Calu3 (cell line): ENCODE measurements at regions of chr6 and their contacts with region 1.

Region 1: DNA sequence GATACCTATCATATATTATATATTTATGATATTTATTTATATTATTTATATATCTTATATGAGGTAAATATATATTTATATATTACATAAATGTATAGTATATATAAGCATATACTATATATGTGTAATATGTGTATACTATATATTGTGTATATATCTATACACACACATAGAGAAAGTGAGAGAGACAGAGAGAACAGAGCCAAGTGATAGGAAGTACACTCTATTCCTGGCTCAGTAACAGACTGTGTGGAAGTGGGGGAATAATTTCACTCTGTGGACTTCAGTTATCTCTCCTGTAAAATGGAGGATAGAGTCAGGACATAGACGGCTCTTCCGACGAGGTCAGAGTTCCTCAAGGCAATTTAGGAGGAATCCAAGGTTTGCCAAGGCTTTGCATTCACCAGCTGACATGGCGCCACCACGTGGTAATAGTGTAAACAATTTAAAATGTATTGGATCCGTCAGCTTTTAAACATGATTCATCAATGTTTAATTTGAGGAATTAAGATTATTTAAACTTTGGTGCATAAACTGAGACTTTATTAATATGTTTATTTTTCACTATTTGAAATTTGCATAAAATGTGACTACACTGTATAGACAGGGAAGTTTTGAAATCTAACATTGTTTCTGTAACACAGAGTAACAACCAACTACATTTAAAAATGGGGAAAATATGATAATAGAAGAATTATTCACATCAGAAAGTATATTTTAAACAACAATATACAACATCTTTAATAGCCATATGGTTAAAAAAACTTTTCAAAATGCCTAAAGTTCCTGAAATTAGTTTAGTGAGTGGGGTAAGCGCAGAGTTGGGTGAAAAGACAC is 75.4 kb upstream of the TMEM244 start:
- DNase-seq: peak; percentile 55
- H3K4me3 Mint-ChIP-seq: no peak overlapping the region
- H3K27ac Mint-ChIP-seq: no peak overlapping the region
- H3K4me1 Mint-ChIP-seq: peaks cover 8% of the 10 kb centered on the region
- H3K27me3 Mint-ChIP-seq: no peaks in the 10 kb centered on the region
- CTCF ChIP-seq: peak; percentile 47

Region 2: DNA sequence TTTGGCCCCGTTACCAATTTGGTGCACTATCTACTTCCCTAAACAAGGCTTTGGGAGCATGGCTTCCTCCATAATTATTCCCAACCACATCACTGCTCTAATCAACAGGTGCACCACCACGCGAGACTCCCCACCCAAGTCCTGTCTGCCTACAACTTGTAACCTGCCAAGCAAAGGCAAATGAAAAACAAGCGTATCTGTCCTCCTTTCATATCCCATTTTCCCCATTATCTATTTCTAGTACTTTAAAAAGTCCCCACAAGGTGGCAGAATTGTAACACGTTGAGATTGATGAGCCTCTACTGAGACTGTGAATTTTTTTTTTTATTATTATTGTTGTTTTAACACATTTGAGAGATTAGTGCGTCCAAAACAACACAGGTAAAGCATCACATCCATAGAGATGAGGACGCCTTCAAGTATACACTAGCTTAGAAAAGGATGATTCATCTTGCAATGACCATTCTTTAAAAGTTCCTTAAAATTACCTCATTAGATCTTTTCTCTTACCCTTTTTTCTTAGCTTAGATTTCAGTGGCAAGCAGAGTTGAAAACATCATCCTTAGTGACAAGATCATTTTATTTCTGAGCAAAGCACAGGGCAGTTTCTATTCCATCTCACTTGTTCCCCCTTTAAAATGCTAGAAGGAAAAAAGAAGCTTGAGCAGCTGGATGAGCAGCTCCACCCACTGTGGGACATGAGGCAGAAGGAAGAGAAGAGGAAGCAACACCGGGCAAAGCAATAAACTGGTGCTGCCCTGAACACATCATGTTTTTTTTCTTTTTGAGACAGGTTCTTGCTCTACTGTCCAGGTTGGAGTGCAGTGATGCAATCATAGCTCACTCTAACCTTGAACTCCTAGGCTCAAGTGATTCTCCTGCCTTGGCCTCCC is 437.4 kb before region 1 on chr6:
- CTCF ChIA-PET with region 1: no interaction called
- intact Hi-C with region 1: loop called (anchors 2 kb)
- DNase-seq: peak; percentile 43
- H3K4me3 Mint-ChIP-seq: peak overlapping the region; percentile 61
- H3K27ac Mint-ChIP-seq: peak overlapping the region; percentile 89
- H3K4me1 Mint-ChIP-seq: peaks cover 63% of the 10 kb centered on the region
- H3K27me3 Mint-ChIP-seq: no peaks in the 10 kb centered on the region
- CTCF ChIP-seq: peak; percentile 77

Region 3: GRCh38 chr6:129598244-129599187 is 338.0 kb before region 1 on chr6:
- CTCF ChIA-PET with region 1: no interaction called
- intact Hi-C with region 1: loop called (anchors 10 kb)
- DNase-seq: peak; percentile 21
- H3K4me3 Mint-ChIP-seq: no peak overlapping the region
- H3K27ac Mint-ChIP-seq: peak overlapping the region; percentile 16
- H3K4me1 Mint-ChIP-seq: no peaks in the 10 kb centered on the region
- H3K27me3 Mint-ChIP-seq: no peaks in the 10 kb centered on the region
- CTCF ChIP-seq: peak; percentile 50

Region 4: DNA sequence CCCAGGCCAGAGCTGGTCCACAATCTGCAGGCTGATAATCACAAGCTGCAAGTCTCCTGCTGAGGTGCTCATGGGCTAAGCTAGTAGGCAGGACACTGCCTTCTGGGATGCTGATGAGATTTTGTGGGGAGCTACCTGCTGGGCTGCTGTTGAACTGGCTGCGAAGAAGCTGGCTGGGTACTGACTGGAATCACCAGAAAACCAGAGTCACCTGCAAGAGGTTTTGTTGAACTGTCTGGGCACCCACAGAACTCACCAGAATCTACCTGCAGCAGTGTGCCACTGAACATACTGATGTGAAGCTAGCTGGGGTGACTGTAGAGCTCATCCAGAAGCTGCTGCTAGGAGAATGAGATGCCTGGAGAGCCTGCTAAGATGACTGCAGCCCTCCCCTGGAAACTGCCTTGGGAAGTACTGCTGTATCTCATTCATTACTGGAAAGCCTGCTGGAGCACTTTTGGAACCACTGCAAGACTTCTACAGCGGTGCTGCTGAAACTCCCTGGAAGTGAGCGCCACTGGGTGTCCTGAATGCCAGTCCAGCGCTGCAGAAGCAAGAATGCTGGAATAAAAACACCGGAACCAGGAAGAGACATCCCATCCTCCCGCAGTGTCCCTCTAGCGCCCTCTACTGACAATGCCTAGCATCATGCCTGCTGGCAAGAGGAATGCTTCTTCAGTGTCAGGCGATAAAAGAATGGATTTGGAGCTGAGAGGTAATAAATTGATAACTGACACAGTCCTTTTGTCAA is 161.7 kb before region 1 on chr6:
- CTCF ChIA-PET with region 1: no interaction called
- intact Hi-C with region 1: loop called (anchors 10 kb)
- DNase-seq: peak; percentile 76
- H3K4me3 Mint-ChIP-seq: no peak overlapping the region
- H3K27ac Mint-ChIP-seq: no peak overlapping the region
- H3K4me1 Mint-ChIP-seq: no peaks in the 10 kb centered on the region
- H3K27me3 Mint-ChIP-seq: peaks cover 29% of the 10 kb centered on the region
- CTCF ChIP-seq: peak; percentile 74

Region 5: DNA sequence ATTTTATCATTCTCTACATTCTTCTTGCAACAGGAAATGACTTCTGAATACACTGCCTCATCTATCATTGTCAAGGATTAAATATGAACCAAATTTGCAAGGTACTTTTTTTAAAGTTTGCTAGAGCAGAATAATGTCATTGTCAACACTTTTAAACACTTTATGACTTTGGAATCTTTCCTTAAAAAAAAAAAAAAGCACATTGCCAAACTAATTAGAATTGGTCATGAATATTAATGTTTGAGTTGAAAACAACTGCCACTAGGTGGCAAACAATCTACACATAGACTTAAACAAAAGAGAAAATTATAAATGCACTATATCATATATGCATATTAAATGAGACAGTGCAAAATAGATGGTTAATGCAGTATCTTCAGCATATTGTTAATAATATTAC is 42.9 kb before region 1 on chr6:
- CTCF ChIA-PET with region 1: no interaction called
- intact Hi-C with region 1: loop called (anchors 1 kb)
- DNase-seq: no peak
- H3K4me3 Mint-ChIP-seq: no peak overlapping the region
- H3K27ac Mint-ChIP-seq: no peak overlapping the region
- H3K4me1 Mint-ChIP-seq: peaks cover 10% of the 10 kb centered on the region
- H3K27me3 Mint-ChIP-seq: no peaks in the 10 kb centered on the region
- CTCF ChIP-seq: peak; percentile 32

Region 6: GRCh38 chr6:130128326-130128725 is 191.8 kb after region 1 on chr6:
- CTCF ChIA-PET with region 1: no interaction called
- intact Hi-C with region 1: no loop called
- DNase-seq: no peak
- H3K4me3 Mint-ChIP-seq: no peak overlapping the region
- H3K27ac Mint-ChIP-seq: no peak overlapping the region
- H3K4me1 Mint-ChIP-seq: no peaks in the 10 kb centered on the region
- H3K27me3 Mint-ChIP-seq: no peaks in the 10 kb centered on the region
- CTCF ChIP-seq: no peak

Region 7: GRCh38 chr6:130269969-130270635 is 333.6 kb after region 1 on chr6:
- CTCF ChIA-PET with region 1: no interaction called
- intact Hi-C with region 1: no loop called
- DNase-seq: no peak
- H3K4me3 Mint-ChIP-seq: no peak overlapping the region
- H3K27ac Mint-ChIP-seq: no peak overlapping the region
- H3K4me1 Mint-ChIP-seq: no peaks in the 10 kb centered on the region
- H3K27me3 Mint-ChIP-seq: no peaks in the 10 kb centered on the region
- CTCF ChIP-seq: no peak